Aorta (tissue), 5 donors: ENCODE measurements at regions of chr21 and their contacts with region 1.

Region 1: DNA sequence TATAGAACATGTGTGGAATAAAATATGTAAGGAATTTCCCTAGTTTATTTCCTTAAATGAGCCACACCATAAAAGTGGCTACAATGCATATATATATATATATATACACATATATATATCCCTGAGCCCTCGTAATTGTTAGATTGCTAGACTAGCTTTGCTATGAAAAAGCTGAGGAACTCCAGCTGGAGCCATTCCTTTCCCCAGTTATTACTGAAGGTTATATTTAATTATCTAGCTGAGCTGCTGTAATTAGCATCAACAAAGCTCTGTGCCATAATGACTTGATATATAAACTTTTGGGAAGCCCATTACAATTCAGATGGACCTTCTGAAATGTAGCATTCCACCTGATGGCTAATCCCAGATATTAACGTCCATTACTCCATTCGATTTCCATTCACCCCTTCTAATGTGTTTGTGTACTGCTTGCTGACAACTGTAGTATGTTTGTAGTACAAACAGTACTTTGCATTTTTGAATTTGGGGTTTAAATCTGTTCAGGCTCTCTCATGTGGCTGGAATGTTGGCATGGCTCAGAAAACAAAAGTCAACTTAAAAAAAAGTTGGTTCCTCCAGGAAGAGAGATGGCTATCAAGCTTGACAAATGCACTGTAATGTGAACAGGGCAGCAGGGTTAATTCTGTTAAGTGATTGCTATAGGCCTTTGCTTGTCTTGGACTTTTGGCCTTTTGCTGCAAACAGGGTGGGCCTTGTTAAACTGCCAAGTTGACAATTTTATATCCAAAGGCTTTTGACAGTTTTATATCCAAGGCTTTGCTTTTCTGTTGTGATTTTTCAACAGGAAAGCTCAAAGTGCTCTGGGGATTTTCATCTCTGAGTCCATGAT is 170.0 kb downstream of the LTN1 start:
- DNase-seq: no peak
- ATAC-seq: peak; percentile 77
- H3K4me3 ChIP-seq: no peak overlapping the region
- H3K27ac ChIP-seq: peak overlapping the region; percentile 79 to 94
- H3K4me1 ChIP-seq: peaks cover 2 to 6% of the 10 kb centered on the region in 2 donors
- H3K27me3 ChIP-seq: no peaks in the 10 kb centered on the region

Region 2: DNA sequence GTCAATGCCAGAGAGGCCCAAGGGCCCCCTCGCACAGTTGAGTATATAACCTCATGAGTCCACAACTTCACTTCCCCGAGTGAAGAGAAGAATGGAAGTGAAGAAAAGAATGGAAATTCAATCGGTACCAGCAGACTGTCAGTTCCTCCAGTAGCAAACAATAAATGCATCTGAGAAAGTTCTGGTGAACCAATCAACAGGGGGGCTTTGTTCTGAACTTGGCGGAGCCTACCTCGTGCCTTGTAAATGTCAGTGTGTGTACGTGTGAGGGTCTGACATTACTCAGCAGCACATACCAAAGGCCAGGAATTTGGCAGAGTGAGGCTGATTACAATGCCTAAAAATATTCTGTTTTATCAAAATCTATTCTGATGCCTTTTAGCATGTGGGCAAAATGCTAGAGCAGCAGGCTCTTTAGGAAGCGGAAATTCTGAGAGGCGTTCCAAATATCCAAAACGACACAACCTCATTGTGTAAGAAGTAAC is 68.5 kb before region 1 on chr21:
- intact Hi-C with region 1: no loop called
- DNase-seq: peak; percentile 65 to 68
- ATAC-seq: peak; percentile 81
- H3K4me3 ChIP-seq: no peak overlapping the region
- H3K27ac ChIP-seq: peak overlapping the region in 1 of 2 donors; percentile 95
- H3K4me1 ChIP-seq: peaks cover 10 to 12% of the 10 kb centered on the region in 2 donors
- H3K27me3 ChIP-seq: no peaks in the 10 kb centered on the region

Region 3: GRCh38 chr21:28793043-28793442 is 29.7 kb before region 1 on chr21:
- intact Hi-C with region 1: no loop called
- DNase-seq: no peak
- ATAC-seq: no peak
- H3K4me3 ChIP-seq: no peak overlapping the region
- H3K27ac ChIP-seq: no peak overlapping the region
- H3K4me1 ChIP-seq: peaks cover 2% of the 10 kb centered on the region in 2 donors
- H3K27me3 ChIP-seq: no peaks in the 10 kb centered on the region

Region 4: DNA sequence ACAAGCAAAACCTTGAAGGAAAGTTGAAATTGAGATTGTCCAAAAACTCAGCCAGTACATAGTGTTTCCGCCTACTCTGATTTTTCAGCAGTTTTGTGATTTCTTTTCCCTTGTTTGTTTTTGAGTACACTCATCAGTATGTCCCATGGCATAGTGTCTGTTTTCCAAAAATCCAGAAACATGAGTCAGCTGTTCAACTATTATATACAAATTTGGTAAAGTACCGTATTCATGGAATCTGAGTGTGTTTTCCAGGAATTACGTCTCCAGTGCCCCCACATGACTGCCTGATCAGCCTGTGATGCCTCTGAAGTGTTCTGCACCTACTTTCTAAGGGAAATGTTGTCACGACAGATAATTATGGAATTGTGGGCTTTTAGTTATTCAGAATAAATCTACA is 16.8 kb before region 1 on chr21:
- intact Hi-C with region 1: loop called in 1 of 2 experiments (anchors 1 kb)
- DNase-seq: no peak
- ATAC-seq: peak; percentile 80
- H3K4me3 ChIP-seq: peak overlapping the region in 1 of 2 donors; percentile 34
- H3K27ac ChIP-seq: peak overlapping the region; percentile 71 to 94
- H3K4me1 ChIP-seq: peaks cover 2 to 5% of the 10 kb centered on the region in 2 donors
- H3K27me3 ChIP-seq: no peaks in the 10 kb centered on the region

Region 5: DNA sequence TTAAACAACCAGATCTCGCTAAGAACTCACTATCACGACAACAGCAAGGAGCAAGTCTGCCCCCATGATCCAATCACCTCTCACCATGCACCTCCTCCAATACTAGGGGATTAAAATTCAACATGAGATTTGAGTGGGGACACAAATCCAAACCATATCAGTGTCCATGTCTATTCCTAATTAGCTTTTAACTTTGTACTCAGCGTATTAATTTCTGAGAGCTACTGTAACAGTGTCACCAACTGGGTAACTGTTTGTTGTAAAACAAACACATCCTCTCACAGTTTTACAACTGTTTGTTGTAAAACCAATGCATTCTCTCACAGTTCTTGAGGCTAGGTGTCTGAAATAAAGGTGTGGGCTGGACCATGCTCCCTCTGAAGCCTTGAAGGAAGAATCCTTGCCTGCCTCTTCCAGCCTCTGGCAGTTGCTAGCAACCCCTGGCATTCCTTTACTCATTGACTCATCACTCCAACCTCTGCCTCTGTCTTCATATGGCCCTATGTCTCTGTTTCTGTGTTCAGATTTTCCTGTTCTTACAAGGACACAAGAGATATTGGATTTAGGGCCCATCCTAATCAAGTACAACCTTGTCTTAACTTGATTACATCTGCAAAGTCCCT is 48.8 kb after region 1 on chr21:
- intact Hi-C with region 1: loop called in 1 of 2 experiments (anchors 10 kb)
- DNase-seq: no peak
- ATAC-seq: no peak
- H3K4me3 ChIP-seq: no peak overlapping the region
- H3K27ac ChIP-seq: peak overlapping the region in 1 of 2 donors; percentile 33
- H3K4me1 ChIP-seq: no peaks in the 10 kb centered on the region
- H3K27me3 ChIP-seq: no peaks in the 10 kb centered on the region

Region 6: GRCh38 chr21:28899744-28900143 is 77.0 kb after region 1 on chr21:
- intact Hi-C with region 1: loop called in 1 of 2 experiments (anchors 5 kb)
- DNase-seq: no peak
- ATAC-seq: no peak
- H3K4me3 ChIP-seq: peak overlapping the region; percentile 12 to 40
- H3K27ac ChIP-seq: peak overlapping the region; percentile 54 to 77
- H3K4me1 ChIP-seq: peaks cover 0 to 3% of the 10 kb centered on the region in 2 donors
- H3K27me3 ChIP-seq: no peaks in the 10 kb centered on the region